Mammary epithelial cell (primary cell): ENCODE measurements at regions of chr6 and their contacts with region 1.

Region 1: DNA sequence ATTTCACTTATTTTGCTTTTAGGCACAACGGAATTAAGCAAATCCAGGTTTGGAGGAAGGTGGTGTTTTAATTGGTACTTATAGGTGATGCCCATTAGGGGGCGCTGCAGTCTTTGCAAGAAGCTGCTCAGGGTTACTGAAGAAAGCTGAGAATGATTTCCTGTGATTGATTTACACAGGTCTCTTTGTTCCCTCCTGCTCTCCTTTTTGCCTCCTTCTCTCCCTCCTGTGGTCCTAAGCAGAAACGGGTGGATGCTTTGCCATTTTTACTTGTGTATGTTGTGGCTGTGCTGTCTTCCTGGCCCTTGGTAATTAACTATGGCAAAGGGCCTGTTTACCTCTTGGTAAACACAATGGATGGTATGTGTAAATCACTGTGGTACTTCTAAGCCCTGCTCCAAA is 97.8 kb downstream of the ANKS1A start:
- DNase-seq: peak; percentile 53
- H3K4me3 ChIP-seq: no peak overlapping the region
- H3K27ac ChIP-seq: no peak overlapping the region
- H3K4me1 ChIP-seq: no peaks in the 10 kb centered on the region
- H3K27me3 ChIP-seq: no peaks in the 10 kb centered on the region
- CTCF ChIP-seq: peak; percentile 72 to 77

Region 2: GRCh38 chr6:34526992-34527728 is 459.7 kb before region 1 on chr6:
- CTCF ChIA-PET with region 1: no interaction called
- dilution Hi-C with region 1: no loop called
- in situ Hi-C with region 1: no loop called
- intact Hi-C with region 1: loop called (anchors 5 kb)
- DNase-seq: peak; percentile 82
- H3K4me3 ChIP-seq: peak overlapping the region in 2 of 3 experiments; percentile 13 to 30
- H3K27ac ChIP-seq: peak overlapping the region; percentile 19
- H3K4me1 ChIP-seq: peaks cover 9% of the 10 kb centered on the region
- H3K27me3 ChIP-seq: no peaks in the 10 kb centered on the region
- CTCF ChIP-seq: peak; percentile 38 to 70

Region 3: GRCh38 chr6:34949636-34950035 is 37.2 kb before region 1 on chr6:
- CTCF ChIA-PET with region 1: interaction called, 18 read pairs
- dilution Hi-C with region 1: no loop called
- in situ Hi-C with region 1: no loop called
- intact Hi-C with region 1: no loop called
- DNase-seq: no peak
- H3K4me3 ChIP-seq: no peak overlapping the region
- H3K27ac ChIP-seq: no peak overlapping the region
- H3K4me1 ChIP-seq: peaks cover 5% of the 10 kb centered on the region
- H3K27me3 ChIP-seq: no peaks in the 10 kb centered on the region
- CTCF ChIP-seq: no peak

Region 4: DNA sequence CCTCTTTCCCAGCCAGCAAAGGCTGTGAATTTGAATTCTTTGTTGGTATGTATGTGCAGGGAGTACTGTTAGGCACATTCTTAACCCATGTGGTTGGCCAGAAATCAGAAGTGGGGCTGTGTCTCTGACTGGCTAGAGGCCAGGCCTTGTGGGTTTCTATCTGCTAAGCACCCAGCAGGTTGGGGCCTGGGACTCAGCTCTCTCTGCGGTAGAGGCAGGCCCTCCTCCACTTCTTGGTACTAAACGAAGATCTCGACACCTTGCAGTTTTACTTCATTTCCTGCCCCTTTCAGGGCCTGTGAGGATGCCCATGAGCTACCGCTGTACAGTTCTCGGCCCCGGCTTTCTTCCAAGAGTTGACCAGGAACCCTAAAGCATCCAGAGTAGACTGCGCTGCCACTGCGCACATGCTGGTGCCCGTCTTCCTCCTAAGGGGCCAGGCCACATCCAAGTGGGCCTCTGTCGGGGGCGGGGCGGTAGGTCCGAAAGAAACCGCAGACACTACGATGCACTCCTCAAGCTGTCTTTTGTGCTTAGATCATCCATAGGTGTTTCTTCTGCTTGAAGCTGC is 103.2 kb after region 1 on chr6:
- CTCF ChIA-PET with region 1: no interaction called
- dilution Hi-C with region 1: no loop called
- in situ Hi-C with region 1: no loop called
- intact Hi-C with region 1: loop called (anchors 5 kb)
- DNase-seq: peak; percentile 88
- H3K4me3 ChIP-seq: no peak overlapping the region
- H3K27ac ChIP-seq: peak overlapping the region; percentile 49
- H3K4me1 ChIP-seq: peaks cover 42% of the 10 kb centered on the region
- H3K27me3 ChIP-seq: no peaks in the 10 kb centered on the region
- CTCF ChIP-seq: no peak

Region 5: GRCh38 chr6:35139908-35140655 is 153.2 kb after region 1 on chr6:
- CTCF ChIA-PET with region 1: interaction called, 13 read pairs
- dilution Hi-C with region 1: no loop called
- in situ Hi-C with region 1: loop called in 1 of 2 experiments (anchors 5 kb)
- intact Hi-C with region 1: loop called (anchors 1 kb)
- DNase-seq: peak; percentile 36
- H3K4me3 ChIP-seq: no peak overlapping the region
- H3K27ac ChIP-seq: no peak overlapping the region
- H3K4me1 ChIP-seq: no peaks in the 10 kb centered on the region
- H3K27me3 ChIP-seq: no peaks in the 10 kb centered on the region
- CTCF ChIP-seq: peak; percentile 87 to 89

Region 6: GRCh38 chr6:35165630-35166071 is 178.8 kb after region 1 on chr6:
- CTCF ChIA-PET with region 1: no interaction called
- dilution Hi-C with region 1: no loop called
- in situ Hi-C with region 1: no loop called
- intact Hi-C with region 1: no loop called
- DNase-seq: peak; percentile 66
- H3K4me3 ChIP-seq: no peak overlapping the region
- H3K27ac ChIP-seq: no peak overlapping the region
- H3K4me1 ChIP-seq: peaks cover 3% of the 10 kb centered on the region
- H3K27me3 ChIP-seq: no peaks in the 10 kb centered on the region
- CTCF ChIP-seq: no peak

Region 7: GRCh38 chr6:35219683-35220326 is 233.0 kb after region 1 on chr6:
- CTCF ChIA-PET with region 1: no interaction called
- dilution Hi-C with region 1: loop called (anchors 5 kb)
- in situ Hi-C with region 1: loop called in 1 of 2 experiments (anchors 10 kb)
- intact Hi-C with region 1: no loop called
- DNase-seq: no peak
- H3K4me3 ChIP-seq: no peak overlapping the region
- H3K27ac ChIP-seq: no peak overlapping the region
- H3K4me1 ChIP-seq: no peaks in the 10 kb centered on the region
- H3K27me3 ChIP-seq: no peaks in the 10 kb centered on the region
- CTCF ChIP-seq: no peak

Region 8: DNA sequence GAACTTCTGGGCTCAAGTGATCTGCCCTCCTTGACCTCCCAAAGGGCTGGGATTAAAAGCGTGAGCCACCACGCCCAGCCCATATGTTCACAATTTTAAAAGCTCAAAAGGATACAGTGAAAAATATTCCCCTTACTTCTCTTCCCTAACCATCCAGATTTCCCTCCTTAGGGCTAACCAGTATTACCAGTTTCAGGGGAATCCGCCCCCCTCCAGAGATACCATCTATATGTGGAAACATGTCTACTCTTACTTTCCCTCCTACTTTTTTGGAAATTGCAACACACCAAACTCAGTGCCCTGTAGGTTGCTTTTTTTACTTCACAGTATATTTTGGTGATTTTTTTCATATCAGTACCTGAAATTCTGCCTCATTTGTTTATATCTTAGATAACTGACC is 474.4 kb after region 1 on chr6:
- CTCF ChIA-PET with region 1: no interaction called
- dilution Hi-C with region 1: no loop called
- in situ Hi-C with region 1: no loop called
- intact Hi-C with region 1: no loop called
- DNase-seq: no peak
- H3K4me3 ChIP-seq: no peak overlapping the region
- H3K27ac ChIP-seq: no peak overlapping the region
- H3K4me1 ChIP-seq: no peaks in the 10 kb centered on the region
- H3K27me3 ChIP-seq: no peaks in the 10 kb centered on the region
- CTCF ChIP-seq: no peak